ENCODE measurements at regions of chr10 and their contacts with region 1.

Region 1: GRCh38 chr10:110871298-110872084 is at the start of gene PDCD4:
- DNase-seq: peak; percentile 87 to 96 (median 90)
- ATAC-seq: peak; percentile 56
- H3K4me3 ChIP-seq: peak within 1 kb of the TSS; percentile 86
- H3K4me3 Mint-ChIP-seq: peak within 1 kb of the TSS; percentile 99
- H3K27ac ChIP-seq: peak within 1 kb of the TSS; percentile 93 to 99
- H3K27ac Mint-ChIP-seq: peak within 1 kb of the TSS; percentile 96
- H3K4me1 ChIP-seq: peaks cover 54% of the 10 kb centered on the region
- H3K4me1 Mint-ChIP-seq: peaks cover 85% of the 10 kb centered on the region
- H3K27me3 ChIP-seq: no peaks in the 10 kb centered on the region
- H3K27me3 Mint-ChIP-seq: no peaks in the 10 kb centered on the region
- CTCF ChIP-seq: no peak
- total RNA-seq, gene PDCD4: 352 to 358 TPM

Region 2: GRCh38 chr10:109823196-109823595 is 1048.3 kb before region 1 on chr10:
- CTCF ChIA-PET with region 1: no interaction called
- POLR2A ChIA-PET with region 1: no interaction called
- intact Hi-C with region 1: no loop called
- DNase-seq: no peak
- ATAC-seq: no peak
- H3K4me3 ChIP-seq: no peak overlapping the region
- H3K4me3 Mint-ChIP-seq: no peak overlapping the region
- H3K27ac ChIP-seq: no peak overlapping the region
- H3K27ac Mint-ChIP-seq: no peak overlapping the region
- H3K4me1 ChIP-seq: no peaks in the 10 kb centered on the region
- H3K4me1 Mint-ChIP-seq: no peaks in the 10 kb centered on the region
- H3K27me3 ChIP-seq: peaks cover 5 to 7% of the 10 kb centered on the region in 2 experiments
- H3K27me3 Mint-ChIP-seq: peaks cover 45% of the 10 kb centered on the region
- CTCF ChIP-seq: no peak

Region 3: DNA sequence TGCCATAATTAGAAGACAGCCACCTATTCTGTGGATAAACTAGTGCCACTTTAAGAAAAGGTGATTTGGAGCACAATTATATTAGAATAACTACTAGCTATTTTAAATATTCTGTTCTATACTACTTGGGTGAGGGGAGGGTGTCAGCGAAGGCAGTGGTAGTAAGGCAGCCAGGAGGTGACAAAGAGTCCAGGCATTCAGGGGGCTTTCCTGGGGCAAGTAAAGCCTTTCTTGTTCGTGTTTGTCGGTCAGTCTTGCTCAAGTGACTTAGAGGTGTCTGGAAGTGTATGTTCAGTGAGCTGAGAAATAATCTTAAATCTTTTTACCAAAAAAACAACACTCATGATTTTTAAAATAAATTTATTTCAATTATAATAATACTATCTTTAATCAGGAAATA is 829.3 kb before region 1 on chr10:
- CTCF ChIA-PET with region 1: no interaction called
- POLR2A ChIA-PET with region 1: no interaction called
- intact Hi-C with region 1: no loop called
- DNase-seq: no peak
- ATAC-seq: no peak
- H3K4me3 ChIP-seq: no peak overlapping the region
- H3K4me3 Mint-ChIP-seq: no peak overlapping the region
- H3K27ac ChIP-seq: no peak overlapping the region
- H3K27ac Mint-ChIP-seq: peak overlapping the region; percentile 80
- H3K4me1 ChIP-seq: peaks cover 28% of the 10 kb centered on the region
- H3K4me1 Mint-ChIP-seq: peaks cover 89% of the 10 kb centered on the region
- H3K27me3 ChIP-seq: no peaks in the 10 kb centered on the region
- H3K27me3 Mint-ChIP-seq: no peaks in the 10 kb centered on the region
- CTCF ChIP-seq: no peak

Region 4: DNA sequence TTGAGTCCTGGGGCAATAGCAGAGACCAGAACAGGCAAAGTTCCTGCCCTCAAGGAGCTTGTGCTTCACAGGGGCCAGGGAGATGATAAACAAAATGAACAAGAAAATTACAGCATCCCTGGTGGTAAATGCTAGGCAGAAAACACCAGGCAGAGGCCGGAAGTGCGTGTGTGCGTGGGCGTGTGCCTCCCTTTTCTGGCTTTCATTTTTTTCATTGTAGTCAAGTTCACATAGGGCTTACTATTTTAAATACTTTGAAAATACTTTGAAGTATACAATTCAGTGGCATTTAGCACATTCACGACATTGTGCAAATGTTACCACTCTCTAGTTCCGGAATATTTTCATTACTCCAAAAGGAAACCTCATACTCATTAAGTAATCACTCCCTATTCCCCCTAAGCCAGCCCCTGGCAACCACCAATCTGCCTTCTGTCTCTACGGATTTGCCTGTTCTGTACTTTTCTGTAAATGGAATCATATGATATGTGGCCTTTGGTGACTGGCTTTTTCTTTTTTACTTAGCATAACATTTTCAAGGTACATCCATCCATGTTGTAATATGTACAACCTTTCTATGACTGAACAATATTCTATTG is 87.9 kb before region 1 on chr10:
- CTCF ChIA-PET with region 1: interaction called, 3 read pairs
- POLR2A ChIA-PET with region 1: interaction called, 4 read pairs
- intact Hi-C with region 1: loop called in 1 of 2 experiments (anchors 2 kb)
- DNase-seq: peak; percentile 46 to 90 (median 71)
- ATAC-seq: peak; percentile 83
- H3K4me3 ChIP-seq: no peak overlapping the region
- H3K4me3 Mint-ChIP-seq: peak overlapping the region; percentile 0
- H3K27ac ChIP-seq: peak overlapping the region; percentile 31 to 62
- H3K27ac Mint-ChIP-seq: peak overlapping the region; percentile 75
- H3K4me1 ChIP-seq: peaks cover 21% of the 10 kb centered on the region
- H3K4me1 Mint-ChIP-seq: peaks cover 65% of the 10 kb centered on the region
- H3K27me3 ChIP-seq: no peaks in the 10 kb centered on the region
- H3K27me3 Mint-ChIP-seq: no peaks in the 10 kb centered on the region
- CTCF ChIP-seq: peak; percentile 10

Region 5: DNA sequence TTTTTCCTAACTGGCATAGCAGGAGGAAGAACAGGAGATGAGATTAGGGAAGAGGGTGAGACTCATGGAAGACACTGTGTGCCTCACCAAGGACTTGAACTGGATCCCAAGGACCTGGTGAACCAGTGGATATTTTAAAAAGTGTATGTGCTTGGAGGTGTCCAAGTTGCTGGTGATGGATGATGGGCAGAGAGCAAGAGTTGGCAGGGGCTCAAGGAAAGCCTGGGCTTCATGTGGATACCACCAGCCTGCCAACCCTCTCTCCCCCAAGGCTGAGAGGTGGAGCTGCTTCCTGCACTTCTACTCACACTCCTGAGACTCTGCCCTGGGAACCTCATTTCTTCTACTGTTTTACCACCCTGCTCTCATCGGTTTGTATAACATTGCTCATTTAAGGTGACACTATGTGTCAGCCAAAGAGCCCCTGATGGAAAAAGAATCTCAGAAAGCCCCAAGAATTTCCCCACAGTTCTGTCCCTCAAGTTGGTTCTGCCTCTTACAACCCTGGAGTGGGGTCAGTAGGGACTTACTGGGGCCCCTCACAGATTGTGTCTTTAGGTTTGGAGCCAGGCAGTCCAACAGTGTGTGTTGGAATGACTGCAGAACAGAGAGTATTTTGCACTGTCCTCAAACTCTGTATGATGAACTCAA is 56.0 kb before region 1 on chr10:
- CTCF ChIA-PET with region 1: no interaction called
- POLR2A ChIA-PET with region 1: interaction called, 4 read pairs
- intact Hi-C with region 1: loop called in 1 of 2 experiments (anchors 5 kb)
- DNase-seq: no peak
- ATAC-seq: no peak
- H3K4me3 ChIP-seq: no peak overlapping the region
- H3K4me3 Mint-ChIP-seq: no peak overlapping the region
- H3K27ac ChIP-seq: no peak overlapping the region
- H3K27ac Mint-ChIP-seq: no peak overlapping the region
- H3K4me1 ChIP-seq: peaks cover 18% of the 10 kb centered on the region
- H3K4me1 Mint-ChIP-seq: peaks cover 41% of the 10 kb centered on the region
- H3K27me3 ChIP-seq: no peaks in the 10 kb centered on the region
- H3K27me3 Mint-ChIP-seq: no peaks in the 10 kb centered on the region
- CTCF ChIP-seq: no peak

Region 6: DNA sequence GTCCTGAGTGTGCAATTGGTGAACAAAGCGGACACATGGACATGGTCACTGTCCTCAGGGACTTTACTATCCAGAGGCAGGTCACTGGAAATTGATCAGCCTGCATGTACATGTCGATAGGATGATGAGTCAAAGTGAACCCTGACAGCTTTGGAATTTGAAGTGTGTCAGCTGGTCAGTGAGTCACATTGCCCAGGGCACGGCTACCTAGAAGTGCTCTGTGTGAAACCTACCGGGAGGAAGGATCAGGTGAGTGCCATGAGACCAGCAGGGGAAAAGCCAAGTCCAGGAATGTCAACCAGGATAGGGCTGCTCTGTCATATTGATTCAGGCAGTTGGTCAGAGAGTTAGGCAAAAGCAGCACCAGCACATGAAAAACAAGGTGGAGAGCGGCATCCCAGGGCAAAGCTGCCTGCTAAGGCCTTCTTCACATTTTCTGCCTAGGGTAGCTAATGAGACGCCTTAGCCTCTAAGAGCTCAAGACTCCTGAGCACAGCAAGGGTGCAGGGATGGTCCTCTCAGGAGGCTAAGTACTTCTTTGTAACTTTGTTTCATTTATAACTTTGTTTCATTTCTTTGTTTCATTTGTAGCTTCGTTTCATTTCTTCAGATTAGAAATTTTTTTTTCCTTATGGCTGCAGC is 19.1 kb before region 1 on chr10:
- CTCF ChIA-PET with region 1: interaction called, 14 read pairs
- POLR2A ChIA-PET with region 1: interaction called, 102 read pairs
- intact Hi-C with region 1: no loop called
- DNase-seq: peak in 1 of 14 experiments; percentile 28
- ATAC-seq: no peak
- H3K4me3 ChIP-seq: no peak overlapping the region
- H3K4me3 Mint-ChIP-seq: peak overlapping the region; percentile 66
- H3K27ac ChIP-seq: no peak overlapping the region
- H3K27ac Mint-ChIP-seq: peak overlapping the region; percentile 52
- H3K4me1 ChIP-seq: peaks cover 61% of the 10 kb centered on the region
- H3K4me1 Mint-ChIP-seq: peaks cover 75% of the 10 kb centered on the region
- H3K27me3 ChIP-seq: no peaks in the 10 kb centered on the region
- H3K27me3 Mint-ChIP-seq: no peaks in the 10 kb centered on the region
- CTCF ChIP-seq: no peak

Region 7: GRCh38 chr10:110883924-110884323 is 12.4 kb after region 1 on chr10:
- CTCF ChIA-PET with region 1: interaction called, 10 read pairs
- POLR2A ChIA-PET with region 1: interaction called, 15 read pairs
- intact Hi-C with region 1: no loop called
- DNase-seq: peak in 1 of 14 experiments; percentile 36
- ATAC-seq: no peak
- H3K4me3 ChIP-seq: peak overlapping the region; percentile 13
- H3K4me3 Mint-ChIP-seq: peak overlapping the region; percentile 71
- H3K27ac ChIP-seq: peak overlapping the region in 1 of 2 donors; percentile 33
- H3K27ac Mint-ChIP-seq: peak overlapping the region; percentile 71
- H3K4me1 ChIP-seq: peaks cover 15% of the 10 kb centered on the region
- H3K4me1 Mint-ChIP-seq: peaks cover 83% of the 10 kb centered on the region
- H3K27me3 ChIP-seq: no peaks in the 10 kb centered on the region
- H3K27me3 Mint-ChIP-seq: no peaks in the 10 kb centered on the region
- CTCF ChIP-seq: no peak

Region 8: DNA sequence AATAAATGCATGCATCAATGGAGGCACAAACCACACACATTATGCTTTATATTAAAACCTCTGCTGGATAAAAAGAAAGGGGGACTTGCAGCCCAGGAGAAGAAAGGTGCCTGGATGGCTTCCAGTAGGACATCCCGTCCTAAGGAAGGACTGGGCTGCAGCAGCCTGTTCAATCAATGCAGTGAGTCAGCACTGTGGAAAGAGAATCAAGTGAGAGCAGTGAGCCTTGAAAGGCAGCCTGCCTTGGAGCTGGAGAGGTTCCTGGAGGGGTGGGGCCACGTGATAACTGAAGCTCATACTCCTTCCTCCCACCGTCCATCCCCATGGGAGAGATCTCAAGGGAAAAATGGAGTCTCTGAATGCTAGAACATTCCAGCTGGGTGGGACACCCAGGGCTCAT is 706.6 kb after region 1 on chr10:
- CTCF ChIA-PET with region 1: no interaction called
- POLR2A ChIA-PET with region 1: no interaction called
- intact Hi-C with region 1: no loop called
- DNase-seq: no peak
- ATAC-seq: no peak
- H3K4me3 ChIP-seq: no peak overlapping the region
- H3K4me3 Mint-ChIP-seq: no peak overlapping the region
- H3K27ac ChIP-seq: no peak overlapping the region
- H3K27ac Mint-ChIP-seq: no peak overlapping the region
- H3K4me1 ChIP-seq: no peaks in the 10 kb centered on the region
- H3K4me1 Mint-ChIP-seq: no peaks in the 10 kb centered on the region
- H3K27me3 ChIP-seq: peaks cover 2 to 11% of the 10 kb centered on the region in 2 experiments
- H3K27me3 Mint-ChIP-seq: peaks cover 27% of the 10 kb centered on the region
- CTCF ChIP-seq: no peak

Measured in CD4-positive, alpha-beta T cell (primary cell).